ENCODE measurements at regions of chr7 and their contacts with region 1.

Region 1: GRCh38 chr7:77798394-77799077 is at the starts of genes PHTF2 and TMEM60:
- DNase-seq: peak; percentile 98 to 99 (median 99)
- ATAC-seq: peak; percentile 96 to 98 (median 98)
- H3K4me3 ChIP-seq: peak within 1 kb of the TSS; percentile 65 to 98 (median 88)
- H3K27ac ChIP-seq: peak within 1 kb of the TSS; percentile 70 to 92 (median 88)
- H3K4me1 ChIP-seq: peaks cover 0 to 80% (median 26%) of the 10 kb centered on the region in 12 donors
- H3K27me3 ChIP-seq: no peaks in the 10 kb centered on the region
- CTCF ChIP-seq: peak; percentile 15 to 70 (median 38)
- POLR2A ChIP-seq: peak in 1 of 2 donors; percentile 72
- total RNA-seq, gene PHTF2: 20.5 to 47.2 (median 24.2) TPM
- total RNA-seq, gene TMEM60: 5.4 to 13.2 (median 8.2) TPM

Region 2: DNA sequence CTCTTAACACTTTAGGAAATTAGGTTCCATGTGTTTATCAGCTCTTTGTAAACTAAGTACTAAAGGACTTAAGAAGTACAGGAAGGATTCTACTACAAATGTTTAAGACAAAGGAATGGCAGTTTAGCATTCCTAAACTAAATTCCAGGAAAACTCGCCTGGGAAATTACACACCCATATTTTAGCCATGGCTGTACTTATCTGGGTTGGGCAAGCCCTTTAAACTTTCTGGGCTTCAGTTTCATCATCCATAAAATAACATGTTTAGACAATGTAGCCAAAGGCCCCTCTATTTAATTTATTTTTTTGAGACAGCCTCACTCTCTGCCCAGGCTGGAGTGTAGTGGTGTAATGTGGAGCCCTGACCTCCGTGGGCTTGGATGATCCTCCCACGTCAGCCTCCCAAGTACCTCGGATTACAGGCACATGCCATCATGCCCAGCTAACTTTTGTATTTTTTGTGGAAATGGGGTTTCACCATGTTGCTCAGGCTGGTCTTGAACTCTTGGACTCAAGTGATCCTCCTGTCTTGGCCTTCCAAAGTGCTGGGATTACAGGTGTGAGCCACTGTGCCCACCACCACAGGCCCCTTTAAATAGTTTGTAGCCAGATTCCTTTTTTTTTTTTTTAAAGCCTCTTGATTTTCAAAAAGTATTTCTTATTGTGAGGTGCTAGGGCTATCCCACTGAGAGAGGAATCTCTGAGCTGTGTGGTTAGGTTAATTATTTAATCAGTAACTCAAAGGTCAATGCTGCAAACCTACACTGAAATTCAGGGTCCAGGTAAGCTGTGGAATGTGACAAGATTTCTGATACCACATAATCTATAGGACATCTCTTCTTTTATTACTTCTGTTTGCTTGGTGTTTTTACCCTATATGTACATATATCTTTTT is 32.4 kb before region 1 on chr7:
- intact Hi-C with region 1: loop called in 1 of 10 experiments (anchors 1 kb)
- DNase-seq: no peak
- ATAC-seq: no peak
- H3K4me3 ChIP-seq: no peak overlapping the region
- H3K27ac ChIP-seq: no peak overlapping the region
- H3K4me1 ChIP-seq: peaks cover 0 to 22% (median 2%) of the 10 kb centered on the region in 12 donors
- H3K27me3 ChIP-seq: no peaks in the 10 kb centered on the region
- CTCF ChIP-seq: no peak
- POLR2A ChIP-seq: no peak

Region 3: DNA sequence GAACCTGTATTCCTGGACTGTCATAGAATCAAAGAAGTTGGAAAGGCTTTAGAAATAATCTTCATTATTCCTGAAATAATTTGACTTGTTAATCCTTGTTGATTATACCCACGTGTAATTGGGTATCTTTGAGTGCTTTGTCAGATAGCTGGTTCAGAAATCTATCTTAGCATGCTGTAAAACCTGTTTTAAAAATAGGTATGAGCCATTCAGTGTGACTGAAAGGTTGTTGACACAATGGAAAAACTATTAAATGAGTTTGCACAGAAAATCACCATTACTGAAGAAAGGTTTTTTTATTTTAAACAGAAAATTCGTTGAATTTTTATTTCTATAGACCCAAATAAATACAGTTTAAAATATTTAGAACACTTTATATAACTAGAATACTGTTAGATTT is 38.8 kb after region 1 on chr7:
- intact Hi-C with region 1: loop called in 1 of 10 experiments (anchors 5 kb)
- DNase-seq: no peak
- ATAC-seq: peak in 2 of 4 donors; percentile 49 to 64
- H3K4me3 ChIP-seq: no peak overlapping the region
- H3K27ac ChIP-seq: no peak overlapping the region
- H3K4me1 ChIP-seq: peaks cover 0 to 35% (median 9%) of the 10 kb centered on the region in 12 donors
- H3K27me3 ChIP-seq: no peaks in the 10 kb centered on the region
- CTCF ChIP-seq: no peak
- POLR2A ChIP-seq: no peak